Panc1 (cell line): ENCODE measurements at regions of chr17 and their contacts with region 1.

Region 1: DNA sequence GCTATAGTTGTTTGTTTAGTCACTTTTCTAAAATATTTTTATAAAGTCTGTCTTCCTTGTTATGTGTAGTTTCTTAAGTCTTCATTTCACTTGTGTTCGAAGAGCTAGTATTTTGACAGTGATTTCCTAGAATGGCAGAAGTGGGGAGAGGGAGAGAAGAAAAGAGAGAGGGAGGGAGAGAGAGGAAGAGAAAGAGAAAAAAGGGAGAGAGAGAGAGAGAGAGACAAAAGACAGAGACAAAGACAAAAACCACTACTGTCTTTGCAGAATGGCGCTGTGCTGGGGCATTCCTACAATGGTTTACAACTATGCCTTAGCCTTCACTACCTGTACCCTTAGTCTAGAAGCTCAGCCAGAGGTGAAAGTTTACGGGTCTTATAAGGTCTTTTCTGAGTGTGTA is 90.5 kb downstream of the CA4 start:
- DNase-seq: no peak
- ATAC-seq: no peak
- H3K4me3 ChIP-seq: no peak overlapping the region
- H3K27ac ChIP-seq: no peak overlapping the region
- H3K4me1 ChIP-seq: no peaks in the 10 kb centered on the region
- H3K27me3 ChIP-seq: no peaks in the 10 kb centered on the region
- CTCF ChIP-seq: no peak

Region 2: DNA sequence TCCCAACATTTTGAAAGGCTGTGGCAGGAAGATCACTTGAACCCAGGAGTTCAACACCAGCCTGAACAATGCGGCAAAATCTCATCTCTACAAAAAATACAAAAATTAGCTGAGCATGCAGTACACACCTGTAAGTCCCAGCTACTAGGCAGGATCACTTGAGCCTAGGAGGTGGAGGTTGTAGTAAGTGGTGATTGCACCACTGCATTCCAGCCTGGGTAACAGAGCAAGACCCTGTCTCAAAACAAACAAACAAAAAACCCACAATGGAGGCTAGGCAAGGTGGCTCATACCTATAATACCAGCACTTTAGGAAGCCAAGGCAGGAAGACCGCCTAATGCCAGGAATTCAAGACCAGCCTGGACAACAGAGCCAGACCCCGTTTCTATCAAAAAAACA is 273.8 kb after region 1 on chr17:
- CTCF ChIA-PET with region 1: no interaction called
- POLR2A ChIA-PET with region 1: interaction called, 12 read pairs
- in situ Hi-C with region 1: no loop called
- intact Hi-C with region 1: no loop called
- DNase-seq: no peak
- ATAC-seq: no peak
- H3K4me3 ChIP-seq: no peak overlapping the region
- H3K27ac ChIP-seq: no peak overlapping the region
- H3K4me1 ChIP-seq: no peaks in the 10 kb centered on the region
- H3K27me3 ChIP-seq: no peaks in the 10 kb centered on the region
- CTCF ChIP-seq: no peak